MCF 10A (cell line): ENCODE measurements at regions of chr15 and their contacts with region 1.

Region 1: DNA sequence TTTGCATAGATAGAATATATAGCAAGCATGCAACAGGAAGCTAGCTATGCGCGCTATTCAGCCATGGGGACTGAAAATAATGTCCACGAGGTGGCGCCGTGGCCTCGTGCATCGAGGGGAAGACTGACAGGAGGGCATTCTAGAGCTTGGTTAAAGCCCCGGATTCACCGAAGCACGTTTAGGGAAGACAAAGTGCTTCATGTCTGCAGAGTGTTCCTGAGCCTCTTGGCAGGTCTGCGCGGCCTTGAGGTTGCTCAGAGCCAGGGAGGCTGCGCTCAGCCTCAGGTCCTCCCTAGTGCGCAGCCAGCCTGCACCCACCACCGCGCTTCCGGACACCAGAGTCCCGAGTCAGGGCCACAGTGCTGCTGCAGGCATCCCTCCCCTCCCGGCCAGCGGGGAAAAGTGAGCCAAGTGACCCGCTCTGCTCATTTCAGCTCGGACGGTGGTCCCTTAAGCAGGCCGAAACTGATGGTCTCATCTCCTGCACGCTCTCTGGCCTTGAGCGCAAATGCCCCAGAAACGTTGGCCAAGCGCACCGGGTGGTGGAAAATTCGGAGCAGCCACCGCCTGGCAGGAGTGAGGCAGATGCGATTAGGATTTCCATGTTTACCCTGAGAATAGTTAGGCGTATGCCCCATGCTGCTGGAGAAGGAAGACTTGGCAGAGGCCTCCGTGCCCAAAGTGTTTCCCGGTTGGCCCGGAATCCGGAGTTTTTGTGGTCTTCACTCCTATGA is 24.8 kb downstream of the GABRA5 start:
- DNase-seq: peak; percentile 5
- H3K4me3 Mint-ChIP-seq: no peak overlapping the region
- H3K27ac Mint-ChIP-seq: no peak overlapping the region
- H3K4me1 Mint-ChIP-seq: no peaks in the 10 kb centered on the region
- H3K27me3 Mint-ChIP-seq: no peaks in the 10 kb centered on the region
- CTCF ChIP-seq: peak; percentile 15

Region 2: GRCh38 chr15:26722621-26723160 is 168.9 kb before region 1 on chr15:
- CTCF ChIA-PET with region 1: no interaction called
- POLR2A ChIA-PET with region 1: no interaction called
- intact Hi-C with region 1: no loop called
- DNase-seq: no peak
- H3K4me3 Mint-ChIP-seq: no peak overlapping the region
- H3K27ac Mint-ChIP-seq: no peak overlapping the region
- H3K4me1 Mint-ChIP-seq: no peaks in the 10 kb centered on the region
- H3K27me3 Mint-ChIP-seq: no peaks in the 10 kb centered on the region
- CTCF ChIP-seq: no peak

Region 3: DNA sequence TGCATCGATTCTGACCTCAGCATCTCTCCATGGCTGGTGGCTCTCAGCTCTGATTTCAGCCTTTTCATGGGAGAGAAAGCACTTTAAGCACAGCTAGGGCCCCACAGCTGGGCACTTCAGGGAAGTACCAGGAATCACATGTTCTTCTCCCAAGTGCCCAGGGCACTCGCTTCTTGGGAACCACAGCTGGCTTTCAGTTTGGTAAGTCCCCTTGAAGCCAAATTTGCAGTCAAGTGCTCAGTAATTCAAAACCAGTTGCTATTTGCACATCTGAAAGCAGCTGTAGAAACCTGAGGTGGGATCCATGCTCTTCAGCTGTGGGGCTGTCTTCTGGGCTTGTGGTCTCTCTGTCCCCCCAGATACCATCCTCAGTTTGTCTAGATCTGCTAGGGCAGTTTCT is 11.9 kb before region 1 on chr15:
- CTCF ChIA-PET with region 1: interaction called, 18 read pairs
- POLR2A ChIA-PET with region 1: no interaction called
- intact Hi-C with region 1: no loop called
- DNase-seq: no peak
- H3K4me3 Mint-ChIP-seq: no peak overlapping the region
- H3K27ac Mint-ChIP-seq: no peak overlapping the region
- H3K4me1 Mint-ChIP-seq: no peaks in the 10 kb centered on the region
- H3K27me3 Mint-ChIP-seq: no peaks in the 10 kb centered on the region
- CTCF ChIP-seq: no peak

Region 4: GRCh38 chr15:28114721-28115622 is 1223.4 kb after region 1 on chr15:
- CTCF ChIA-PET with region 1: interaction called, 12 read pairs
- POLR2A ChIA-PET with region 1: no interaction called
- intact Hi-C with region 1: no loop called
- DNase-seq: no peak
- H3K4me3 Mint-ChIP-seq: no peak overlapping the region
- H3K27ac Mint-ChIP-seq: peak overlapping the region; percentile 28
- H3K4me1 Mint-ChIP-seq: no peaks in the 10 kb centered on the region
- H3K27me3 Mint-ChIP-seq: no peaks in the 10 kb centered on the region
- CTCF ChIP-seq: no peak